ENCODE measurements at regions of chr20 and their contacts with region 1.

Region 1: DNA sequence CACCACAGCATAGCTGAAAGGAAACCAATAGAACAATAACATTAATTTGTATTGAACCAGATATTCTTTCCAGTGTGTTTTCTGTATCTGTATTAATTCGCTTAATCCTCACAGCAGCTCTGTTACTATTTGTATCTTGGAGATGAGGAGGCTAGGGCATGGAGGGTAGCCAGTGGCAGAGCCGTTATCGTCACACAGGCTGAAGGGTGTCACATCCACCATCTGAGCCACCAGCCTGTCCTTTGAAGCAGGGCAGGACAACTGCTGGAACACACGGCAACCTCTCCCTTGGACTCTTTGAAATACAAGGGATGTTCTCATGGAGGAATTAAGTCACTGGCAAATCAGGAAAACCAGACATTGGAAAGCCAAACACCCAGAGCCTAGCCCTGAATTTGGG is 628.0 kb upstream of the CDH4 start:
- DNase-seq: no peak
- H3K4me3 ChIP-seq: no peak overlapping the region
- H3K27ac ChIP-seq: no peak overlapping the region
- H3K4me1 ChIP-seq: no peaks in the 10 kb centered on the region
- H3K27me3 ChIP-seq: peaks cover 6% of the 10 kb centered on the region
- CTCF ChIP-seq: no peak

Region 2: DNA sequence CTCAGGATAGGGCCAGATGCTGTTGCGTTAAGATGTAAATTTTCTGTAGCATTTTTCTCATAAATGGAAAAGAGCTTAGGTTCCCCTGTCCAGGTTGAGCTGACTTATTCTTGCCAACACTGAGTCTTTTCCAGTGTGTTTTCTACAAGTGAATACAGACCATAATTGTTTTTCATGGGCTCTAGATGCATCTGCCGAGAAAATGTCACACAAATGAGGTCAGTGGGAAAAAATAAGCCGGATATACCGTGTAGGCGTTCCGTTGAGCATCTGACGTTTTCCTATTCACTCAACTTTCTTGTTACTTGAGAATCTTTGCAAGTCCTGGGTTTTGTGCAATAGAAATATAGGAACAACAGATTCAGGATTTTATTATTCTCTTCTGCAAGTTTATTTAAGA is 45.1 kb after region 1 on chr20:
- CTCF ChIA-PET with region 1: no interaction called
- dilution Hi-C with region 1: loop called (anchors 5 kb)
- in situ Hi-C with region 1: no loop called
- intact Hi-C with region 1: no loop called
- DNase-seq: no peak
- H3K4me3 ChIP-seq: no peak overlapping the region
- H3K27ac ChIP-seq: no peak overlapping the region
- H3K4me1 ChIP-seq: no peaks in the 10 kb centered on the region
- H3K27me3 ChIP-seq: peaks cover 4% of the 10 kb centered on the region
- CTCF ChIP-seq: no peak

Region 3: GRCh38 chr20:60900618-60901017 is 276.6 kb after region 1 on chr20:
- CTCF ChIA-PET with region 1: no interaction called
- dilution Hi-C with region 1: no loop called
- in situ Hi-C with region 1: no loop called
- intact Hi-C with region 1: no loop called
- DNase-seq: no peak
- H3K4me3 ChIP-seq: no peak overlapping the region
- H3K27ac ChIP-seq: no peak overlapping the region
- H3K4me1 ChIP-seq: no peaks in the 10 kb centered on the region
- H3K27me3 ChIP-seq: no peaks in the 10 kb centered on the region
- CTCF ChIP-seq: no peak